ENCODE measurements at regions of chr21 and their contacts with region 1.

Region 1: DNA sequence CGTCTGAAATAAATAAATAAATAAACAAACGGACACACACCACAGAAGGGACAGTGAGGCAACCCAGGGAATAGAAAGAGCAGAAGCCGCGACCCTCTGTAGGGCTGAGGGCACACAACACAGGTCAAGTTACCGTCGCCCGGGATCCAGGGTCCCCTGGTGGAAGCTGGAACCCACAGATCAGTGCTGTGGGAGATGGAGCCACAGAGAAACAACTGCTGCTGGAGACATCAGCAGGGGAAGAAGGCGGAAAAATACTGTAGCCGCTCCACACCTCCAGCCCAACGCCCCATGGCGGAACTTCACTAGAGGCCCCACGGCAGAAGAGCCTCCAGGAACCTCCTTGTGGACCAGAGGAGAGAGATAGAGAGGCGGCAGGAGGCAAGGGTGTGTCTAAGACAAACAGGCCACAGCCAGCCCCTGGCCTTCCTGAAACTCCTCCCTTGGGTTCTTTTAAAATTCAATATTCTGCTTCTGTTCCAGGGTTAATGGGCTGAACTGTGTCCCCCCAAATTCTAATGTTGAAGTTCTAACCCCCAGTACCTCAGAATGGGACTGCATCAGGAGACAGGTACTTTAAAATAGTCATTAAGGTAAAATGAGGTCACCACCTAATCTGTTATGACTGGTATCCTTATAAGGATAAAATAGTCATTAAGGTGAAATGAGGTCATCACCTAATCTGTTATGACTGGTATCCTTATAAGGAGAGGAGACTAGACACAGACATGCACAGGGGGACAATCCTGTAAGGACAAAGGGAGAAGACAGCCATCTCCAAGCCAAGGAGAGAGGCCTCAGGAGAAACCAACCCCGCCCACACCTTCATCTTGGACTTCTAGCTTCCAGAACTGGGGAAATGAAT is 7.7 kb upstream of the HLCS start:
- DNase-seq: no peak
- H3K4me3 ChIP-seq: no peak overlapping the region
- H3K27ac ChIP-seq: no peak overlapping the region
- H3K4me1 ChIP-seq: peaks cover 0 to 9% (median 0%) of the 10 kb centered on the region in 4 donors
- H3K27me3 ChIP-seq: no peaks in the 10 kb centered on the region
- CTCF ChIP-seq: no peak

Region 2: DNA sequence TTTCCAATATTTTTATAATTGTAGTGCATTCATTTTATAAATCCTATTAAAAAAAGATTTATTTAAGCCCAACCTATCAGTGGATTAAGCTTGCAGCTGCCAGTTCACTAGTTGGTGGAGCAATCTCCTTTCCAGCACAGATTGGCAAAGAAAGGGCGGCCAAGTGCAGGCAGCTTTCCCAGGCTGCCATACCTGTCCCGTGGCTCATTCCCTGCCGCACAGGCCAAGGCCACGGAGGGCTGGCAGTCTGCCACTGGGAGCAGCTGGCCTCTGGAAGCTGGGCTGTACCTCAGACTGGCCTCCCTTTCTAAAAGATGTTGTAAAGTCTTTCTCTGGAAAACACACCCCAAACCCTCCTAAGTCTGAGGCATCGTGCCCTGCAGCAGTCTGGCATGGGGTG is 201.1 kb before region 1 on chr21:
- intact Hi-C with region 1: no loop called
- DNase-seq: peak; percentile 46 to 81
- H3K4me3 ChIP-seq: no peak overlapping the region
- H3K27ac ChIP-seq: no peak overlapping the region
- H3K4me1 ChIP-seq: peaks cover 0 to 8% (median 4%) of the 10 kb centered on the region in 4 donors
- H3K27me3 ChIP-seq: no peaks in the 10 kb centered on the region
- CTCF ChIP-seq: no peak

Region 3: DNA sequence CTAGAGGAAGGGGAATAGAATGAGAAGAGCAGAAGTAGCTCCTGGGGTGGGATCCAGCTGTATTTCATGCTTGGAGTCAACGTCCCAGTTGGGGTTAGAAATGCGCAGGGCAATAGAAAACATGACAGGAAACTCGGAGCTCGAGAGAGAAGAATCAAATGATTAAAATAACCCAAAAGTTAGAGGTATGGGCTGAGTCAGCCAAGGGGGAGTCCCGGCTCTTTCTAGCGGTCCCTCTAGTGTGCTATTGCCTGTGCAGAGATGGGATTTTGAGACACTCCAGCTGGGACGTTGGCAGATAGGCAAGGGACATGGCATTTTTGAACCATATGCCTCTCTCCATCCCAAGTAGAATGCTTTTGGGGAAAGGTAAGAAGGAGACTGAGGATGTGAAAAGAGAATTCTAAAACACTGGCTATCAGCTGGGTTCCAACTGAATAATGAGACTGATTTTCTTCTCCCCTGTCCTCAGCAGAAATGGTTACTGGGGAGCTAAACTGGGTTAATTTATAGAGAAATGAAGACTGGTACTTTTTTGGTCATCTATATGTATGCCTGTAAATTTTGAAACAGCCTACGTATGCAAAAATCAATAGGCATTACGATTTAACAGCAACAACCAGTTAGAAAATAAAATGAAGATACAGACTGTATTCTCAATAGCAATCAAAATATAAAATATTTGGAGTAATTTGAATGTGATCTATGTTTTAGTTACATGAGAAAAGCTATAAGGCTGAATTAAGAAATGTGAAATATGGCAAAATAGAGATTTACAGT is 299.9 kb after region 1 on chr21:
- intact Hi-C with region 1: loop called (anchors 5 kb)
- DNase-seq: no peak
- H3K4me3 ChIP-seq: no peak overlapping the region
- H3K27ac ChIP-seq: no peak overlapping the region
- H3K4me1 ChIP-seq: no peaks in the 10 kb centered on the region
- H3K27me3 ChIP-seq: peaks cover 0 to 3% of the 10 kb centered on the region in 2 donors
- CTCF ChIP-seq: no peak

Measured in tibial artery (tissue), 4 donors.